Ovary (tissue), 10 donors: ENCODE measurements at regions of chr5 and their contacts with region 1.

Region 1: DNA sequence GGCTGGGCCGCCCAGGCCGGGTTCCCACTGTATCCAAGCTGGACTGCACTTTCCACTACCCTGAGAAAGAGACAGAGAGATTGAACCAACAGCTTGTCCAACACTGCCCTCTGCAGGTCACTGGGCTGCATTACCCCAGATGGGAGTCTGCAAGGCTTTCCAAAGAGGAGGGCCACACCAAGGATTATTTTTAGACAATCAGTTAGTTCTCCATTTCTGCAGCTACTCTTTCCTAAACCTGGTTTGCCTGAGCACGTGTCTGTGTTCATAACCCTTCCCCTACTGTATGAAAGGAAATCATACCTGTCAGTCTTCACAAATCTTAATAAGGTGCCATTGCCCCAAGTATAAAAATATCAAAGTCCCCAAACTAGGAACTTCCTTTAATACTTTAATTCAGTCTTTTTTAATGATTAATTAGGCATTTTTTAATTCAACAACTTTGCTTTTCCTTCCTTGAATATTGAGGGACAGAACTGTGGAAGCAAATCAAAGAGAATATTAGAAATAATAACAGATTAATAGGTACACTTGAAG is 13.4 kb upstream of the FGF1 start:
- DNase-seq: peak; percentile 77 to 89 (median 87)
- H3K4me3 ChIP-seq: no peak overlapping the region
- H3K27ac ChIP-seq: no peak overlapping the region
- H3K4me1 ChIP-seq: peaks cover 11% of the 10 kb centered on the region
- H3K27me3 ChIP-seq: no peaks in the 10 kb centered on the region
- CTCF ChIP-seq: peak; percentile 59 to 91 (median 82)
- EP300 ChIP-seq: no peak
- POLR2A ChIP-seq: peak; percentile 24

Region 2: DNA sequence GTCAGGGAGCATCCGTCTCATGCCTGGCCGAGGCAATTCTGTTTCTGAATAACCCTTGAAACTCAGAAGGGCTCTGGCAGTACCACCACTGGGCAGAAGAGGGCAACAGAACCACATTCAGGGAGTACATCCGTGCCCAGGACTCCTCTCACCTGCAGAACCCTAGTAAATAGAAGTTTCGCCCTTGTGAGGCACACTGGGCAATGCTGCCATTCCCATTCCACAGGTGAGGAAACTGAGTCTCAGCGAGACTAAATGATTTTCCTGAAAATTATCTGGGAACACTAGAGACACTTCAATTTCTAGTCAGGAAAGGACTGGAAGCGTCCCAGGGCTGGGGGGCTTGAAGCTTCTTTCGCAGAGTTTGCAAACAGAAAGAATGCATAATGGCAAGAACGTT is 88.1 kb before region 1 on chr5:
- intact Hi-C with region 1: loop called (anchors 2 to 5 kb)
- DNase-seq: peak; percentile 60 to 83 (median 76)
- H3K4me3 ChIP-seq: no peak overlapping the region
- H3K27ac ChIP-seq: no peak overlapping the region
- H3K4me1 ChIP-seq: no peaks in the 10 kb centered on the region
- H3K27me3 ChIP-seq: no peaks in the 10 kb centered on the region
- CTCF ChIP-seq: peak; percentile 60 to 84 (median 71)
- EP300 ChIP-seq: no peak
- POLR2A ChIP-seq: no peak

Region 3: GRCh38 chr5:142645456-142645855 is 53.8 kb before region 1 on chr5:
- intact Hi-C with region 1: no loop called
- DNase-seq: no peak
- H3K4me3 ChIP-seq: no peak overlapping the region
- H3K27ac ChIP-seq: no peak overlapping the region
- H3K4me1 ChIP-seq: no peaks in the 10 kb centered on the region
- H3K27me3 ChIP-seq: no peaks in the 10 kb centered on the region
- CTCF ChIP-seq: no peak
- EP300 ChIP-seq: no peak
- POLR2A ChIP-seq: no peak

Region 4: DNA sequence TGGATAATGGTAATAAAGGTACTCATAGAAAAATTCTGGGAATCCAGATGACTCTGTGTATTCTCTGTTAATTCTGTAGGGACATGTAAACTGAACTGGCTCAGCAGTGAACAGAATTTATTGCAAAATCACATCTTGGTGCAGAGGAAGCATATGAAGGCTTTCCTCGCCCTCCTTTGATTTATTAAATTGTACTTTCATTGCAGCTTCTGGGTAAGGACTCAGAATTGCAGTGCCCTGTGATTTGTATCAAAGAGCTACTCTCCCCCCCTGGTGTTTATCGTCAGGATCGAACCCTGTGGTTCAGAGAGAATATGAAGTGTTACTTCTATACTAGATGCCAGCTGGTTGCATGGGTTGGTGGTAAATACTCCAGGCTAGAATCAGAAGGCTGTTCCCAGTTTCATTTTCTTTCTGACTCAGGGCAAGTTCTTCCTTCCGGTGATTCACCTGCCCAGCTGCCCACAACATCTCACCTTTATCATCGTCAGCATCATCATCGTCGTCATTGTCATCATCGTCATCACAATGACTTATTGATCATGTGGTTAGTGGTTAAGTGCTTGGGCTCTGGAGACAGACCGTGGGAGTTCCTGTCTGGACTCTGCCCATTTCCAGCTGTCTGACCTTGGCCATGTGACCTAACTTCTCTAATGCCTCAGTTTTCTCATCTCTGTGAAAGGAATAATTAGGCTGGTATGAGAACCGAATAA is 309.7 kb after region 1 on chr5:
- intact Hi-C with region 1: no loop called
- DNase-seq: no peak
- H3K4me3 ChIP-seq: no peak overlapping the region
- H3K27ac ChIP-seq: no peak overlapping the region
- H3K4me1 ChIP-seq: no peaks in the 10 kb centered on the region
- H3K27me3 ChIP-seq: no peaks in the 10 kb centered on the region
- CTCF ChIP-seq: no peak
- EP300 ChIP-seq: no peak
- POLR2A ChIP-seq: no peak